ENCODE measurements at regions of chr11 and their contacts with region 1.

Region 1: DNA sequence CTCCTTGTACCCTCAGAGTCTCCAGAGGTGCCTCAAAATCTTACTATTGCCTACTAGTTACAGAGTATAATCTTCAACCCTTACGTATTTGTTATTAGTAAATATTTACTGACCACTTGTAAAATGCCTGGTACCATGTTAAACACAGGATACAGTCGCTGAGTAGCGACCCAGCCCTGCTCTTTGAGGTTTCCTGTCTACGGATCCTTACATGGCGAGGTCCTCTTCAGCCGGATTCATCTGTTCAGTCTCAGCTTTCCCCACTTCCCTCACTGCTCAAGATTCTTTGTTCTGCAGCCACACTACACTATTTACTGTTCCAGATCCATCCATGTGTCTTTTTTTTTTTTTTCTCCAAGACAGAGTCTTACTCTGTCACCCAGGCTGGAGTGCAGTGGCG is 13.2 kb upstream of the TTC36 start:
- DNase-seq: no peak
- H3K4me3 ChIP-seq: no peak overlapping the region
- H3K27ac ChIP-seq: no peak overlapping the region
- H3K4me1 ChIP-seq: no peaks in the 10 kb centered on the region
- CTCF ChIP-seq: no peak

Region 2: DNA sequence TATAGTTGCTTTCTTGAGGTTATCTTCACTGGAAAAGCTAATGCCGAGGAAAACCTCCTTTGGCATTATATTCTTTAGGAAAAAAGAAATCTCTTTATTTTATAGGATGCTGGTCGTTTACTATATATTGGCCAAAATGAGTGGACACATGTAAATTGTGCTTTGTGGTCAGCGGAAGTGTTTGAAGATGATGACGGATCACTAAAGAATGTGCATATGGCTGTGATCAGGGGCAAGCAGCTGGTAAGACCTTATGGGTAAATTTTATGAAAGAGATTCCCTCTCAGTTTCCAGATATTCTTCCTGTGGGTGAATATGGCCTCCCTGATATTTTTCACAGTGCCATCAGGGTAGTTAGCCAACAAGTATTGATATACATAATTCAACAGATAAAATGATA is 16.3 kb before region 1 on chr11:
- CTCF ChIA-PET with region 1: no interaction called
- POLR2A ChIA-PET with region 1: interaction called, 10 read pairs
- intact Hi-C with region 1: no loop called
- DNase-seq: no peak
- H3K4me3 ChIP-seq: no peak overlapping the region
- H3K27ac ChIP-seq: no peak overlapping the region
- H3K4me1 ChIP-seq: no peaks in the 10 kb centered on the region
- CTCF ChIP-seq: no peak